Heart right ventricle (tissue), 16 donors: ENCODE measurements at regions of chr18 and their contacts with region 1.

Region 1: DNA sequence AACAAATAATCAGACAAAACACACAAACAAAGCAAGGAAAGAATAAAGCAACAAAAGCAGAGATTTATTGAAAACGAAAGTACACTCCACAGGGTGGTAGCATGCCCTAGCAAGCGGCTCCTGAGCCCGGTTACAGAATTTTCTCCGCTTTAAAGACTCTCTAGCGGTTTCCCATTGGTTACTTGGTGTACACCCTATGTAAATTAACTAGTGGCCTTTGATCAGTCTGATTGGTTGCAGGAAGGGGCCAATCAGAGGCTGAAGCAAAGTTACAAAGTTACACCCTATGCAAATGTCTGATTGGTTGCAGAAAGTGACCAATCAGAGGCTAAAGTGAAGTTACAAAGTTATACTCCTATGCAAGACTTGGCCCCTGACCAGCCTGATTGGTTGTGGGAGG is 242.9 kb downstream of the LDLRAD4 start:
- DNase-seq: no peak
- ATAC-seq: no peak
- H3K4me3 ChIP-seq: no peak overlapping the region
- H3K27ac ChIP-seq: no peak overlapping the region
- H3K4me1 ChIP-seq: peaks cover 0 to 49% (median 41%) of the 10 kb centered on the region in 9 donors
- H3K27me3 ChIP-seq: no peaks in the 10 kb centered on the region
- CTCF ChIP-seq: no peak

Region 2: GRCh38 chr18:13425462-13426133 is 35.9 kb before region 1 on chr18:
- intact Hi-C with region 1: loop called in 1 of 10 experiments (anchors 1 kb)
- DNase-seq: no peak
- ATAC-seq: no peak
- H3K4me3 ChIP-seq: no peak overlapping the region
- H3K27ac ChIP-seq: no peak overlapping the region
- H3K4me1 ChIP-seq: peaks cover 14 to 63% (median 28%) of the 10 kb centered on the region in 9 donors
- H3K27me3 ChIP-seq: no peaks in the 10 kb centered on the region
- CTCF ChIP-seq: no peak